A673 (cell line): ENCODE measurements at regions of chr5 and their contacts with region 1.

Region 1: DNA sequence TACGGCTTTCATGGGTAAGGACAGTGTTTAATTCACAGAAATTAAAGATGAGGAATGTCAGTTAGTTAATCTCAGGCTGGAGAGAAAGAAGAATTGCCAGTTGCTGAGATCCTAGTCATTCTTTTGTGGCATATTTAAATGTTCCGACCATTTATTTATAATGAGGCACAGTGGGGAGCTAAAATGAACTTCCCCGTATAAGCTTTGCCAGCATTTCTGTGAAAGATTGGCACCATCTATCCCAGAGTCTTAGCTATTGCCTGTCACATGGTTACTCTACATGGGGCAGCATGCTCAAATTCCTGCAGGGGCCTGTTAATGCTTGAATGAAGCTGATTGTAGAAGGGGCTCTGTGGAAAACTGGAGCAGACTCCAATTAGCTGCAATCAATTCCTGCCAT is 314.1 kb downstream of the PRELID2 start:
- DNase-seq: peak; percentile 95
- H3K4me3 ChIP-seq: no peak overlapping the region
- H3K27ac ChIP-seq: no peak overlapping the region
- H3K4me1 ChIP-seq: peaks cover 32% of the 10 kb centered on the region
- H3K27me3 ChIP-seq: no peaks in the 10 kb centered on the region
- CTCF ChIP-seq: no peak

Region 2: GRCh38 chr5:145562931-145563330 is 41.9 kb after region 1 on chr5:
- CTCF ChIA-PET with region 1: no interaction called
- POLR2A ChIA-PET with region 1: no interaction called
- intact Hi-C with region 1: loop called (anchors 2 kb)
- DNase-seq: peak; percentile 97
- H3K4me3 ChIP-seq: no peak overlapping the region
- H3K27ac ChIP-seq: peak overlapping the region; percentile 67
- H3K4me1 ChIP-seq: peaks cover 48% of the 10 kb centered on the region
- H3K27me3 ChIP-seq: no peaks in the 10 kb centered on the region
- CTCF ChIP-seq: no peak